Heart right ventricle (tissue), 16 donors: ENCODE measurements at regions of chr16 and their contacts with region 1.

Region 1: DNA sequence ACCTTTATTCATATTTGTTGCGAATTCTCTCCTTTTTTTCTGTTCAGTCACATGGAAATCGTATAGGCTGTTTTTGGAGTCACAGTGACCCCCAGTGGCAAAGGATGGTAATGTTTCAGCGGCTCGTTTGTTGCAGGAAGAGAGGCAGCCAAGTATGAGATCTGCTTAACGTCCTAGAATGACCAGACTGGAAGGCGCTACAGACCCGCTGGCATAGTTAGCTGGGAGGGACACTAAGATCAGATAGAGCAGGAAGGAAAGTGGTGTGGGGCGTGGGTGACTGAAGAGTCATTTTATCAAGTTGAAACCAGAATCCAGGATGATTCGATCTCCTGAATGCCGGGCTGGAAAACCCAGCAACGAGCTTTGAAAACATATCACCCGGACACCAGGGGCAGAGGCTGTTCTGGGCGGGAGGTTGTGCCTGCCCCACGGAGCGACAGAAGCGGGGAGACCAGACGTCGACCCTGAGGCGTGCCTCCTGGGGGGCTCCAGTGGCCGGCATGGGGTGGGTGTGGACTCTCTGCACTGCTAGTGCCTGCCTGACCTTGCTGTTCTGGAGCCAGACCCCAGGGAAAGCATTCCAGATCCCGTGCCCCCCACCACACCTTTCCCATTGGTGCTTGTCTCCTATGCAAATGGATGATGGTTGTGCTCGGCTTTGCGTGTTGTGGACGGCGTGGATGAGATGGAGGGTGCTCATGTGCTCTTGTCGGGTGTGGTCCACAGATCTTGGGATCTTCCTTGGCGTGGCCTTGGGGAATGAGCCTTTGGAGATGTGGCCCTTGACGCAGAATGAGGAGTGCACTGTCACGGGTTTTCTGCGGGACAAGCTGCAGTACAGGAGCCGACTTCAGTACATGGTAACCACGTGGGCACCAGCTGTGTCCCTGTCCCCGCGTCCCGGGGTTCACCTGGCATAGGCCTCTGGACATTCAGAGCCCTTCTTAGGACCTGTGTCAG is 7.7 kb downstream of the IL34 start:
- DNase-seq: peak; percentile 64 to 82
- ATAC-seq: peak; percentile 78 to 88 (median 82)
- H3K4me3 ChIP-seq: peak overlapping the region in 8 of 10 donors; percentile 1 to 42 (median 34)
- H3K27ac ChIP-seq: peak overlapping the region in 6 of 10 donors; percentile 18 to 59 (median 46)
- H3K4me1 ChIP-seq: peaks cover 0 to 12% (median 9%) of the 10 kb centered on the region in 9 donors
- H3K27me3 ChIP-seq: no peaks in the 10 kb centered on the region
- CTCF ChIP-seq: peak; percentile 81 to 93 (median 89)

Region 2: GRCh38 chr16:70331588-70332358 is 322.3 kb before region 1 on chr16:
- intact Hi-C with region 1: loop called in 2 of 10 experiments (anchors 2 to 10 kb)
- DNase-seq: no peak
- ATAC-seq: peak in 6 of 8 donors; percentile 46 to 74 (median 58)
- H3K4me3 ChIP-seq: no peak overlapping the region
- H3K27ac ChIP-seq: no peak overlapping the region
- H3K4me1 ChIP-seq: peaks cover 0 to 5% (median 0%) of the 10 kb centered on the region in 9 donors
- H3K27me3 ChIP-seq: no peaks in the 10 kb centered on the region
- CTCF ChIP-seq: peak; percentile 19 to 67 (median 55)

Region 3: GRCh38 chr16:70364399-70364798 is 289.7 kb before region 1 on chr16:
- intact Hi-C with region 1: loop called in 4 of 10 experiments (anchors 10 kb)
- DNase-seq: no peak
- ATAC-seq: no peak
- H3K4me3 ChIP-seq: no peak overlapping the region
- H3K27ac ChIP-seq: no peak overlapping the region
- H3K4me1 ChIP-seq: no peaks in the 10 kb centered on the region
- H3K27me3 ChIP-seq: no peaks in the 10 kb centered on the region
- CTCF ChIP-seq: no peak

Region 4: DNA sequence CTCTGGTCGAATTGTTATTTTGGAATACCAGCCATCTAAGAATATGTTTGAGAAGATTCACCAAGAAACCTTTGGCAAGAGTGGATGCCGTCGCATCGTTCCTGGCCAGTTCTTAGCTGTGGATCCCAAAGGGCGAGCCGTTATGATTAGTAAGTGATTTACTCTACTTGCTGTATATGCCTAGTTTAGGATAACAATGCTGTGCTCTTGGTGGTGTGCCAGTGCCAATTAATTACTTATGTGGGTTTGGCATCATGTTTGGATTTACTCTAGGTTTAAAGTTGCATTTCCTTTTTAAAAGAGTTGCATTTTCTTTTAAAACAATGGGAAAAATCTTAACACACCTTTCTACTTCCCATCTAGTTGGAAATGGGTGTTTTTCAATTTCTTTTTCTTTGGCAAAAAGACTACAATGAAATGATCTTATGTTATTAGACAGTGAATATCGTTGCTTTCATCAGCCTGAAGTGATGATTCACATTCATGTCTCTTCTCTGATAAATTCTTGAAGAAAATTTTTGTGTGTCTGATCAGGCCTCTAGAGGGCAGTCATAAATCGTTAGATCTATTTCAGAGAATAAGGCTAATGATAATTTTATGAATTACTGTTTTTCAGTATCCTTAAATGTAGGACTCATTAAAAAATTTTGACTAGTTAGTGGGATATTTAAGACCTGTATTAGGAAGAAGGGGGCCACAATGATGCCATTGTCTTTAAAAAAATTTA is 124.9 kb before region 1 on chr16:
- intact Hi-C with region 1: loop called (anchors 1 to 10 kb)
- DNase-seq: no peak
- ATAC-seq: peak in 1 of 8 donors; percentile 45
- H3K4me3 ChIP-seq: peak overlapping the region in 1 of 10 donors; percentile 6
- H3K27ac ChIP-seq: no peak overlapping the region
- H3K4me1 ChIP-seq: peaks cover 0 to 57% (median 44%) of the 10 kb centered on the region in 9 donors
- H3K27me3 ChIP-seq: no peaks in the 10 kb centered on the region
- CTCF ChIP-seq: peak; percentile 27 to 72 (median 63)

Region 5: GRCh38 chr16:70561623-70562022 is 92.5 kb before region 1 on chr16:
- intact Hi-C with region 1: loop called in 1 of 10 experiments (anchors 10 kb)
- DNase-seq: no peak
- ATAC-seq: no peak
- H3K4me3 ChIP-seq: no peak overlapping the region
- H3K27ac ChIP-seq: no peak overlapping the region
- H3K4me1 ChIP-seq: peaks cover 0 to 3% (median 0%) of the 10 kb centered on the region in 9 donors
- H3K27me3 ChIP-seq: no peaks in the 10 kb centered on the region
- CTCF ChIP-seq: no peak

Region 6: GRCh38 chr16:71216714-71217113 is 562.6 kb after region 1 on chr16:
- intact Hi-C with region 1: no loop called
- DNase-seq: no peak
- ATAC-seq: no peak
- H3K4me3 ChIP-seq: no peak overlapping the region
- H3K27ac ChIP-seq: no peak overlapping the region
- H3K4me1 ChIP-seq: no peaks in the 10 kb centered on the region
- H3K27me3 ChIP-seq: peaks cover 0 to 10% (median 0%) of the 10 kb centered on the region in 7 donors
- CTCF ChIP-seq: no peak